Activated CD8-positive, alpha-beta memory T cell treated with anti-CD3 and anti-CD28 coated beads, Interleukin-2, amount 10 ng/mL, durations not matched to agents 7 days and 5 days (primary cell): ENCODE measurements at regions of chr12 and their contacts with region 1.

Region 1: DNA sequence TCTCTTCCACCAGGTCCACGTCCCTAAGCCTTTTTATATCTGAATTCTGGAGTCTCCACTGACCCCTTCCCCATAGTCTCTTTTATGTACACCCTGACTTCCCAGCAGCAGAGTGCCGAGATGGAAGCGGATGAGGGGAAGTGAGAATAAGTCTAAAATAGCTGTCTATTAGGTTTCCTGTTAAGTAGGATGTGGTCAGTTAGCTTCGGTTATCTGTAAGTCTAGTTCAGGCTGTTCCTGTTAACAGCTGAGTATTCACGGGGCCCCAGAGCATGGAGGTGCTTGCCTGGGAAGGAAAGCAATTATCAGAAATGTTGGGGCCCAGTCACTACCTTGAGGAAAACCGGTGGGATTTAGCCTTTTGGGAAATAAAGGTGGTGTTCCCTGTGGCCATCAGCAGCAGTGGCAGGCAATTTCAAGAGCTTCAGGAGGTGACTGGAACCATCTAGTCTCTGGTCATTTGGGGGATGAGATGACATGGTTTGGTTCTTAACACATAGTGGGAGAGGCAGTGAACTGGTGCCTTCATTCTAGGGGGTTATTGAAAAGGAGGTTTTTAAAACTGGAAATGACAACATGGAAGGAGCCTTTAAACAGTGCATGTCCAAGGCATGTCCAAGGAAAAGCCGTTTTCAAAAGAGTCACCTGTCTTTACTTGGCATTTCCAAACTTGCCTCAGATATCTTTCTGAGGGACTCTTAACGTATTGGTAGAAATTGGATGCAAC is 21.8 kb downstream of the CHST11 start:
- DNase-seq: peak; percentile 70
- ATAC-seq: peak; percentile 84
- H3K4me3 Mint-ChIP-seq: peak overlapping the region; percentile 81
- H3K27ac Mint-ChIP-seq: peak overlapping the region; percentile 97
- H3K4me1 Mint-ChIP-seq: peaks cover 85% of the 10 kb centered on the region
- H3K27me3 Mint-ChIP-seq: no peaks in the 10 kb centered on the region

Region 2: GRCh38 chr12:104467346-104467837 is 11.2 kb before region 1 on chr12:
- CTCF ChIA-PET with region 1: interaction called, 22 read pairs
- DNase-seq: no peak
- ATAC-seq: peak; percentile 49
- H3K4me3 Mint-ChIP-seq: peak overlapping the region; percentile 51
- H3K27ac Mint-ChIP-seq: peak overlapping the region; percentile 80
- H3K4me1 Mint-ChIP-seq: peaks cover 97% of the 10 kb centered on the region
- H3K27me3 Mint-ChIP-seq: no peaks in the 10 kb centered on the region

Region 3: DNA sequence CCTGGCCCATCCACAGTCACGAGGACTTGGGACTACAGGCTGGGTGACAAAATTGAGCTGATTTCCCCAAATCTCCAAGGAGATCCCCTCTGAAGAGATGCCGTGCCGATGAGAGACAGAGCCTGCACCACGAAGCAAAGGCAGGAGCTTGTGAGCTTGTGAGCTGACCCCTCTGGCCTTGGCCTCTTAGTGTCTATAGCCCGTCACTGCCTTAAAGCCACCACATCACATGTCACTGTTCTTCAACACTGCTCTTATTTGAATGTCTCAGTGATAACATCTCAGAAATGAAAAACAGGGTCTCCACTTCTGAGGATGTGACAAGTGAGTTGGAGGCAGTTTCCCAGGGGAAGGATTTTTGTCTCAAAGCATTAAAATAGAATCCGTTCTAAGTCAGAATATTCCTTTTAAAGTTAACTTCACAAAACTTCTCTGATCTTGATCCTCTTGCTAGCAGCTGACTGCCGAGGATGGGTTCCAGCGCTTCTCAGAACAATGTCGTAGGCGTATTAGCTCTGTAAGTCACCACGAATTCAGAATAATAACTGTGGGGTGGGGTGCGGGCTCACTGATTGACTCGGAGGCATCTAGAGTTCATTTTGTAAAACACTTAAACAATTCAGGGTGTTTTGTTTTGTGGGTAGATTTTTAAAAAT is 15.7 kb after region 1 on chr12:
- CTCF ChIA-PET with region 1: interaction called, 13 read pairs
- DNase-seq: peak; percentile 89
- ATAC-seq: peak; percentile 74
- H3K4me3 Mint-ChIP-seq: peak overlapping the region; percentile 70
- H3K27ac Mint-ChIP-seq: peak overlapping the region; percentile 93
- H3K4me1 Mint-ChIP-seq: peaks cover 86% of the 10 kb centered on the region
- H3K27me3 Mint-ChIP-seq: no peaks in the 10 kb centered on the region